IMR-90 (cell line): ENCODE measurements at regions of chr17 and their contacts with region 1.

Region 1: GRCh38 chr17:19447085-19447583 is 36.1 kb downstream of the RNF112 start:
- DNase-seq: peak; percentile 70
- ATAC-seq: peak; percentile 65
- H3K4me3 ChIP-seq: no peak overlapping the region
- H3K27ac ChIP-seq: peak overlapping the region; percentile 65; the same call in 1 of the 2 replicates
- H3K4me1 ChIP-seq: peaks cover 17% of the 10 kb centered on the region
- H3K27me3 ChIP-seq: peaks cover 2% of the 10 kb centered on the region; the same call in 1 of the 2 replicates
- CTCF ChIP-seq: peak; percentile 90
- POLR2A ChIP-seq: 0 out of 2 replicates have a peak, but pooled peaks have one; percentile 21
- RAD21 ChIP-seq: peak; percentile 88

Region 2: DNA sequence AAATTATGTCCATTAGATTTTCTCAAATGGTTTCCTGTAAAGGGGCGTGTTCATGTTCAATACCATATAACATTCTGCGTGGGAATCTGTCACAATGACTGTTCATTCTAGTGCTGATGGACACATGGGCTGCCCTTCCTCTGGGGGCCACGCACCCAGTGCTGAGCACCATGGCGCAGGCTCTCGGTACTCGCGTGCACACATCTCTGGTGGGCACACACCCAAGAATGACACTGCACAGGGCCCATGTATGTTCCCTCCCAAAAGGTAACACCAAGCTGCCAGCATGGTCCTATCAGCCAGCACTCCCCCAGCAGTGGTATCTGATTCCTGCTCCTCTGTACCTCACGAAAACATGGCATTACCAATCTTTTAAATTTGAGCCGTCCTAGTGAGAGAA is 98.3 kb before region 1 on chr17:
- CTCF ChIA-PET with region 1: interaction called, 10 read pairs
- POLR2A ChIA-PET with region 1: no interaction called
- dilution Hi-C with region 1: no loop called
- in situ Hi-C with region 1: no loop called
- intact Hi-C with region 1: no loop called
- DNase-seq: no peak
- ATAC-seq: no peak
- H3K4me3 ChIP-seq: no peak overlapping the region
- H3K27ac ChIP-seq: no peak overlapping the region
- H3K4me1 ChIP-seq: peaks cover 17% of the 10 kb centered on the region
- H3K27me3 ChIP-seq: no peaks in the 10 kb centered on the region
- CTCF ChIP-seq: no peak
- POLR2A ChIP-seq: no peak
- RAD21 ChIP-seq: no peak

Region 3: DNA sequence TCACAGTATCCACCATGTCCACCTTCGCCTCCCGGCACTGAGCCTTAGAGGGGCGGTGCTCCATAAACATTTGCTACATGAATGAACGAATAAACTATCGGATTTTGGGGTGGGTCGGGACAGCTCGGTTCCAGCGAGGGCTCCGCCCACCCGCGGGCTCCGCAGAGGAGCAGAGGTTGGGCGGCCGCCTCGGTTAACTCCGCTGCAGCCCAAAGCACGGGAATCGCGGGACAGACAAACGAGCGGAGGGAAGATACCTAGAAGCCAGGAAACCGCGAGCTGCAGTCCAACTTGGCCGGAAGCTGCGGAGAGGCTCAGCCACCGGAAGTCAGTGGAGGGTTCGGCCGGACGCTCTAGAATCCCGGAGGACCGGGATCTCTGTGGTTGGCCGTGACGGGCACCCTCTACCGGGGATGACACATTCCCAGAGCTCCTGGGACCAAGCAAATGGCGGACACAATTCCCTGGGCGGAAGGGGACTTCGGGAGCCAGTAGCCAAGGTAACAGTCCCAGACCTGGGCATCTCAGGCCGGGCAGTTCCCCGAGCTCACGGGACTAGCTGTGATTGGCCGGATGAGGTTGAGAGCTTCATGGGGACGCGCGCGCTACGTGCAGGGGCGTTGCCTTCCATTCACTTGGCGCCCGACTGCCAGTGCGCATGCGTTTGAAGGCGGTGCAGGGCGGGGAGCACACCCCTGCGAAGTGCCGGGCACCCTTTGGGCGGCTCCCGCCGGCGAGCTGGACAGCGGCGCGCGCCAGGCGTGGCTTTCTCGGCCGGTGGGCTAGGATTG is 69.3 kb before region 1 on chr17:
- CTCF ChIA-PET with region 1: interaction called, 16 read pairs
- POLR2A ChIA-PET with region 1: no interaction called
- dilution Hi-C with region 1: no loop called
- in situ Hi-C with region 1: no loop called
- intact Hi-C with region 1: no loop called
- DNase-seq: peak; percentile 99
- ATAC-seq: peak; percentile 95
- H3K4me3 ChIP-seq: peak overlapping the region; percentile 66
- H3K27ac ChIP-seq: peak overlapping the region; percentile 90
- H3K4me1 ChIP-seq: peaks cover 12% of the 10 kb centered on the region; the same call in 1 of the 2 replicates
- H3K27me3 ChIP-seq: no peaks in the 10 kb centered on the region
- CTCF ChIP-seq: no peak
- POLR2A ChIP-seq: peak; percentile 91
- RAD21 ChIP-seq: no peak

Region 4: GRCh38 chr17:19386974-19387920 is 59.9 kb before region 1 on chr17 and contains the start of gene MFAP4:
- CTCF ChIA-PET with region 1: interaction called, 4 read pairs
- POLR2A ChIA-PET with region 1: interaction called, 8 read pairs
- dilution Hi-C with region 1: no loop called
- in situ Hi-C with region 1: no loop called
- intact Hi-C with region 1: loop called (anchors 1 kb)
- DNase-seq: peak; percentile 90
- ATAC-seq: peak; percentile 43
- H3K4me3 ChIP-seq: peak within 1 kb of the TSS; percentile 57
- H3K27ac ChIP-seq: peak within 1 kb of the TSS; percentile 96
- H3K4me1 ChIP-seq: peaks cover 52% of the 10 kb centered on the region
- H3K27me3 ChIP-seq: no peaks in the 10 kb centered on the region
- CTCF ChIP-seq: no peak
- POLR2A ChIP-seq: no peak
- RAD21 ChIP-seq: no peak
- total RNA-seq, gene MFAP4: 5.0 and 7.0 TPM in 2 replicates

Region 5: DNA sequence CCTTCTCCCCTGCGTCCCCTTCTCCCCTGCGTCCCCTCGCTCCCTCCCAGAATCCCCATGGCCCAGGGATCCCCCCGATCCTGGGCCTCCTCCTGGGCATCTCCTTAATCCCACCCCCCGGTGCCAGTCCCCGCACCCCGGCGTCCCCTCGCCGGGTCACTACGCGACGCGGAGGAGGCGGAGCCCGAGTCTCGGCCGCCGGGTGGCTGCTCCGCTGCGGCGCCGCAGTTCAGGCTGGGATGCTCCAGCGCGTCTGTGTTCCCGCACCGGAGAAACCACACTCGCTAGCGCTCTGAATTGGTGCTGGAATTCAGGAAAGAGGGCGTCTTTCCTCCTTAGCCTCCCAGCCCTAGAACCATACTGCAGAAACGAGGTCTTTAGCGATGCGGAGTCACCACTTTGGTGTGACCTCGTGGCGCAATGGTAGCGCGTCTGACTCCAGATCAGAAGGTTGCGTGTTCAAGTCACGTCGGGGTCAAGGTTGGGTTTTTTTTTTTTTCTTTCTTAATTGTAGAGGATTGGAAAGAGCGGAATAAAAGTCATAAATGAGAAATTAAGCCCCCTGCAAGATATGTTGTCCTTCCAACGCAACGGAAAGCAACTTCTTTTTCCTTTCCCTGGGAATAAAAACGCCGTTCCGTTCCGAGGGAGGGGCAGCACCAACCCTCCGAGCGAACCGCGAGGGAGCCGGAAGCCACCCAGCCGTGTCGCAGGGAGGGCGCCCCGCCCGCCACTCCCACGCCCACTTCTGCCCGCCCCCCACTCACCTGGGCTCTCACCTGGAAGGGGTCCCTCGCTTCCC is 60.8 kb after region 1 on chr17:
- CTCF ChIA-PET with region 1: interaction called, 3 read pairs
- POLR2A ChIA-PET with region 1: no interaction called
- dilution Hi-C with region 1: no loop called
- in situ Hi-C with region 1: loop called (anchors 5 kb)
- intact Hi-C with region 1: loop called (anchors 1 kb)
- DNase-seq: peak; percentile 92
- ATAC-seq: peak; percentile 98
- H3K4me3 ChIP-seq: peak overlapping the region; percentile 36
- H3K27ac ChIP-seq: peak overlapping the region; percentile 59
- H3K4me1 ChIP-seq: no peaks in the 10 kb centered on the region
- H3K27me3 ChIP-seq: no peaks in the 10 kb centered on the region
- CTCF ChIP-seq: no peak
- POLR2A ChIP-seq: no peak
- RAD21 ChIP-seq: no peak